ENCODE measurements at regions of chr10 and their contacts with region 1.

Region 1: DNA sequence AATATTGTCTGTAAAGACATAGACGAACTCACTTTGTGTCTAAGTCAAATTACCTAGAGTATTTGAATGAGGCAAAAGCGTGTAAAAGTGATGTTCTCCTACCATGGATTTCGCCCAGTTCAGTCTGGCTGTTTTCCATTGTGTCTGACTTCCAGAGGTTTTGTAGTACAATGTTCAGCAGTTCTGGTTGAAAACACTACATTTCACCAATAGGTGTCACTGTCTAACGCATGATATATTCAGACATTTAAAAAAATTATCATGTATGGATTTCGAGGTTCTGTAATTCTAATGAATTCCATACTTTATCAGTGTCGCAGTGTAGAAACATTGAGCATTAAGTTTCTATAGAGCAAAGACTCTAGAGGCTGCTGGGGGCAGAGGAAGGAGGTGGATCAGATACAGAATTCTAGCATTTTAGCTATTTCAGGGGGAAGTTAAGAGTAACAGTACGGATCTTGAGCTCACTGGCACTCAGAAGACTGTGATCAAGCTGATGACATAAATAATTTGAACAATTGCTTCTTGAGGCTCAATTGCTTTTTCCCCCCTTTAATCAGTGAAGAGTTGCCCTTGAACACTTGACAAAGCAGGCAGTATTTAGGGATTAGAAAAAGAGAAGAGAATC is 196.9 kb upstream of the RHOBTB1 start:
- H3K4me3 Mint-ChIP-seq: no peak overlapping the region
- H3K27ac Mint-ChIP-seq: no peak overlapping the region
- H3K4me1 Mint-ChIP-seq: peaks cover 5% of the 10 kb centered on the region
- H3K27me3 Mint-ChIP-seq: no peaks in the 10 kb centered on the region

Region 2: GRCh38 chr10:60816628-60817397 is 324.1 kb before region 1 on chr10:
- intact Hi-C with region 1: loop called (anchors 1 kb)
- H3K4me3 Mint-ChIP-seq: peak overlapping the region; percentile 57
- H3K27ac Mint-ChIP-seq: peak overlapping the region; percentile 82
- H3K4me1 Mint-ChIP-seq: peaks cover 23% of the 10 kb centered on the region
- H3K27me3 Mint-ChIP-seq: peaks cover 2% of the 10 kb centered on the region

Region 3: DNA sequence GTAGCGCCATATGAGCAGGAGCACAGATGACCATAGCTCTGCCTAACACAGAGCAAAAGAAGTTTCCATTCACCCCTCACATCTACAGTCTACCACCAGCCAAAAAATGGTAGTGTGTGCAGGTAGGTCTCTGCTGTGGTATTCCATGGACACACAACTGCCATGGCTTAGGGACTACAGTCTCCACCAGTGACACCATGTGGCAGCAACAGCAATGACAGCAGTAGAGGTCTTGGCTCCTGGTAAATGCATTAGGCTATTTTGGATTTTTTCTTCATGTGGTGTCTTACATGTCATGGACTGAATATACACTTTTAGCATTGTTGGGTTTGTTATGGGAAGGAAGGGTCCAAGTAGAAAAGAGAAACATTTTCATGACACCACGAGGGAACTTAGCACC is 451.7 kb after region 1 on chr10:
- intact Hi-C with region 1: loop called (anchors 2 kb)
- H3K4me3 Mint-ChIP-seq: no peak overlapping the region
- H3K27ac Mint-ChIP-seq: no peak overlapping the region
- H3K4me1 Mint-ChIP-seq: peaks cover 7% of the 10 kb centered on the region
- H3K27me3 Mint-ChIP-seq: no peaks in the 10 kb centered on the region

Region 4: GRCh38 chr10:61733358-61733940 is 592.6 kb after region 1 on chr10:
- intact Hi-C with region 1: loop called (anchors 2 kb)
- H3K4me3 Mint-ChIP-seq: no peak overlapping the region
- H3K27ac Mint-ChIP-seq: no peak overlapping the region
- H3K4me1 Mint-ChIP-seq: no peaks in the 10 kb centered on the region
- H3K27me3 Mint-ChIP-seq: no peaks in the 10 kb centered on the region

Region 5: GRCh38 chr10:61835069-61835945 is 694.4 kb after region 1 on chr10:
- intact Hi-C with region 1: loop called (anchors 10 kb)
- H3K4me3 Mint-ChIP-seq: no peak overlapping the region
- H3K27ac Mint-ChIP-seq: no peak overlapping the region
- H3K4me1 Mint-ChIP-seq: no peaks in the 10 kb centered on the region
- H3K27me3 Mint-ChIP-seq: peaks cover 2% of the 10 kb centered on the region

Measured in dendritic cell treated with granulocyte-macrophage colony-stimulating factor and Interleukin-4, amounts not matched to agents 40 ng/mL and 50 ng/mL, for 4 days (primary cell).